ENCODE measurements at regions of chrX and their contacts with region 1.

Region 1: GRCh38 chrX:120015145-120016067 is 62.1 kb downstream of the RHOXF2B start:
- DNase-seq: no peak
- H3K4me3 ChIP-seq: no peak overlapping the region
- CTCF ChIP-seq: no peak
- POLR2A ChIP-seq: no peak

Region 2: GRCh38 chrX:119852382-119853353 is 162.7 kb before region 1 on chrX and contains the start of gene UPF3B:
- intact Hi-C with region 1: no loop called
- DNase-seq: peak; percentile 96 to 99
- H3K4me3 ChIP-seq: peak within 1 kb of the TSS; percentile 62
- CTCF ChIP-seq: no peak
- POLR2A ChIP-seq: peak in 1 of 2 donors; percentile 51
- total RNA-seq, gene UPF3B: 4.3 to 5.6 (median 5.1) TPM

Region 3: DNA sequence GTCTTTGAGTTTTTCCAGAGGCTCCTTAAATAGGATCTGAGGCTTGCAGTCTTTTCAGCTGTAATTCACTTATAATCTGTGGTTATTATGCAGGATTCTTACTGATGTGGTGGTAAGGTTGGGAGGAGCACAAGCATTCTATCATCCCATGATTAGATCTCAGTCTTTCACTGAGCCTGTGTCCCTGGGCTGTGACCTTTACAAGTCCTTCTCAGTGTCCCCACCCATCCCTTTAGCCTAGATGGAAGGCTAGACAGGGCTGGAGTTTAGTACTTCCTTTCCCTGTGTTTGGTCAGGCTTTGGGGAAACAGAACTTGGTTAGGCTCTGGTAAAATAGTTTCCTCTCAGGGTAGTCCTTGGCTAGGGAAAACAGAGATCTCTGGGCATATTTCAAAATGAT is 54.8 kb before region 1 on chrX:
- intact Hi-C with region 1: no loop called
- DNase-seq: no peak
- H3K4me3 ChIP-seq: no peak overlapping the region
- CTCF ChIP-seq: no peak
- POLR2A ChIP-seq: no peak

Region 4: GRCh38 chrX:120111611-120112010 is 96.2 kb after region 1 on chrX:
- intact Hi-C with region 1: loop called (anchors 10 kb)
- DNase-seq: no peak
- H3K4me3 ChIP-seq: no peak overlapping the region
- CTCF ChIP-seq: no peak
- POLR2A ChIP-seq: no peak